ENCODE measurements at regions of chr12 and their contacts with region 1.

Region 1: GRCh38 chr12:56468216-56469006 is at the start of gene SPRYD4:
- DNase-seq: peak; percentile 96
- H3K4me3 Mint-ChIP-seq: peak within 1 kb of the TSS; percentile 93
- H3K27ac Mint-ChIP-seq: peak within 1 kb of the TSS; percentile 96
- H3K4me1 Mint-ChIP-seq: peaks cover 31% of the 10 kb centered on the region
- H3K27me3 Mint-ChIP-seq: no peaks in the 10 kb centered on the region
- total RNA-seq, gene SPRYD4: 2.4 to 2.9 TPM

Region 2: DNA sequence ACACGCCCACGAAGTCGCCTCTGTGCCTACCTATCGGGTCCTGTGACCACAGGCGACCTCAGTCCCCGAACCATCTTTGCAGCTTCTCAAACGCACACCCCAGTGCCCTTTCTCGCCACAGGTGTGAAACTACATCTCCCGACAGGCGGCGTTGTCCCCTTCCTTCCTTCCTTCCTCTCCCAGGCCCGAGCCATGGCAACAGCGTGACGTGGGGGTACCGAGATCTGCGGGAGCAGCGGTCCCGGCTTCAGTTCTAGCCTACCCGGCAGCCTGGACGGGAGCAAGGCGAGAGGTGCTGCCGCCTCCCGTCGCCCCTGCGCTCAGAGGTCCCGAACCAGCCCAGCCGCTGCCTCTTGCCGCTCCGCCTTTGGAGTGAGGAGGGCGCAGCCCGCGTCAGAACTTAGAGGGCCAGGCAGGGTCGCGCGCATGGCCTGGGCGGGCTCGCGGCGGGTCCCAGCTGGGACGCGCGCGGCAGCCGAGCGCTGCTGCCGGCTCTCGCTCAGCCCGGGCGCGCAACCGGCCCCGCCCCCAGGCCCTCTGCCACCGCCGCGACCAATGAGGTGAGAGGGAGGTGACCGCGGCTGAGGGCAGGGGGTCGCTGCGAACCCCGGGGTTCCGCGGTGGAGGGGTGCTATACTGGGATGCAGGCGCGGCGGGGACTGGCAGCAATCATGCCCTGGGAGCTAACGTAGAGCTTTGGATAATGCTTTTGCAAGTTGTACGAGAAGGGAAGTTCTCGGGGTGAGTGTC is 201.5 kb before region 1 on chr12 and contains the start of gene COQ10A:
- CTCF ChIA-PET with region 1: interaction called, 19 read pairs
- POLR2A ChIA-PET with region 1: no interaction called
- intact Hi-C with region 1: loop called (anchors 1 kb)
- DNase-seq: peak; percentile 91
- H3K4me3 Mint-ChIP-seq: peak within 1 kb of the TSS; percentile 88
- H3K27ac Mint-ChIP-seq: peak within 1 kb of the TSS; percentile 79
- H3K4me1 Mint-ChIP-seq: peaks cover 20% of the 10 kb centered on the region
- H3K27me3 Mint-ChIP-seq: no peaks in the 10 kb centered on the region
- total RNA-seq, gene COQ10A: 6.3 to 7.0 TPM

Region 3: DNA sequence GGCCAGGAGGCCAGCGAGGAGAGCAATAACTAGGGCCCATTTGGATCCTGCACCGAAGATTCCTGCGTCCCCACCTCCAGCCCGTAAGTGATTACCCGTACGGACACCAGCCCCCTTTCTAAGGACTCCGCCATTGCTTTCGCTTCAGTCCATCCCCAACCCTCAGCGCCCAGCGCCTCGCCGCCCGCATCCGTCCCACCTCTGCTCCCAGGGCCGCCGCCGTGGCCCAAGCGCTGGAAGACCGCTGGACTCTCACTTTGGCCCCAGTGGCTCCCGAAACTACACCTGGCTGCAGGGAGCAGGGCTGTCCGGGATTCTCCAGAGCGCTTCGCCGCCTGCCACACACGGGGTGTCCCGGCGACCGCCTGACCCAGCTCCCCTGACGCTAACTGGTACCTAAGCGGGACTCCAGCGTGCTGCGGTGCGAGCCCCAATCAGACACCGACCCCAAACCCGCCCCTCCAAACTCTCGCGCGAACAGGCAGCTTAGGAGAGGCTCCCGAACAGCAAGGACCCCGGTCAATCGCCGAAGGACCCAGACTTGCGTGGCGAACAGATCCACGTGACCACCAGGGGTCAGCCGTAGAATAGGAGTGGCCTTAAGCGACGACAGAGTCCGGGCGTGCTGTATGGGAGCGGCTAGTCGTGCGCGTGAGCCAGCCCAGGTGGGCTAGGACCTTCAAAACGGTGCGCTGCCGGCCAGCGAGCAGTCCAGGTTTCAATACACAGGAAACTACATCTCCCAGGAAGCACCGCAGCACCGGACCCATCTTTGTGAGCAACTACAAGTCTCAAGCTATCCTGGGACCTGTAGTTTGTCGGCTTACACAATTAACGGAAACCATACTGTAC is 152.6 kb before region 1 on chr12 and contains the start of gene CNPY2:
- CTCF ChIA-PET with region 1: interaction called, 32 read pairs
- POLR2A ChIA-PET with region 1: interaction called, 4 read pairs
- intact Hi-C with region 1: loop called (anchors 1 kb)
- DNase-seq: peak; percentile 95
- H3K4me3 Mint-ChIP-seq: peak within 1 kb of the TSS; percentile 98
- H3K27ac Mint-ChIP-seq: peak within 1 kb of the TSS; percentile 97
- H3K4me1 Mint-ChIP-seq: peaks cover 16% of the 10 kb centered on the region
- H3K27me3 Mint-ChIP-seq: no peaks in the 10 kb centered on the region
- total RNA-seq, gene CNPY2: 74.7 to 91.6 TPM

Region 4: GRCh38 chr12:56359851-56360767 is 108.3 kb before region 1 on chr12 and contains the start of gene STAT2:
- CTCF ChIA-PET with region 1: interaction called, 22 read pairs
- POLR2A ChIA-PET with region 1: interaction called, 8 read pairs
- intact Hi-C with region 1: loop called (anchors 1 kb)
- DNase-seq: peak; percentile 100
- H3K4me3 Mint-ChIP-seq: peak within 1 kb of the TSS; percentile 89
- H3K27ac Mint-ChIP-seq: peak within 1 kb of the TSS; percentile 94
- H3K4me1 Mint-ChIP-seq: peaks cover 19% of the 10 kb centered on the region
- H3K27me3 Mint-ChIP-seq: no peaks in the 10 kb centered on the region
- total RNA-seq, gene STAT2: 125 to 139 TPM

Region 5: GRCh38 chr12:56425193-56425592 is 43.2 kb before region 1 on chr12:
- CTCF ChIA-PET with region 1: interaction called, 12 read pairs
- POLR2A ChIA-PET with region 1: no interaction called
- intact Hi-C with region 1: no loop called
- DNase-seq: no peak
- H3K4me3 Mint-ChIP-seq: no peak overlapping the region
- H3K27ac Mint-ChIP-seq: no peak overlapping the region
- H3K4me1 Mint-ChIP-seq: peaks cover 4% of the 10 kb centered on the region
- H3K27me3 Mint-ChIP-seq: no peaks in the 10 kb centered on the region

Region 6: DNA sequence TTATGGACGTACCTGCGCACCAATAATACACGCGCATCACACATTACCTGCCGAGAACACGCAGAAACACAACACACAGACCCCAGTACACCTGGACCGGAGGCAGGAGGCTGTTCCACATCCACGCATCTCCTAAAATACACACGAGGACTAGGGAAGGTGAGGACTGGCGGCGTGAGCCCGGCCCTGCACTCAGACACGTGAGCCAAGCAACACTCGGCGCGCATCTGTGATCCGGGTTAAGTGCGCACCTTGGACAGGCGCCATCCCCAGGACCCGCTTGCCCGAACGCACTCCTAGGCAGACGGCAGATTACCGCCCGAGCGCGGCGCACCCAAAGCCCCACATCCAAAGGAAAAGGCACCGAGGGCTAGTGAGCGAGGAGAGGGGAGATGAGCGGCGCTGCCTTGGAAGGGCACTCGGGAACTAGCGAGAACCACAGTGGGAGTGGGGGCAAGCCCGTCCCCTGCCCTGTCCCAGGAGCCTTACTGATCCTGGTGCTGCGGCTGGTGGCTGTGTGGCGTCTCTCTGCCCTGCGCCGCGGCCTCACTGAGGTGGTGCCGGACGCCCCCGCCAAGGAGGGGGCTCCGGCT is 19.1 kb after region 1 on chr12:
- CTCF ChIA-PET with region 1: interaction called, 9 read pairs
- POLR2A ChIA-PET with region 1: no interaction called
- intact Hi-C with region 1: loop called (anchors 1 kb)
- DNase-seq: peak; percentile 54
- H3K4me3 Mint-ChIP-seq: peak overlapping the region; percentile 73
- H3K27ac Mint-ChIP-seq: no peak overlapping the region
- H3K4me1 Mint-ChIP-seq: peaks cover 19% of the 10 kb centered on the region
- H3K27me3 Mint-ChIP-seq: peaks cover 13% of the 10 kb centered on the region

Measured in activated CD4-positive, alpha-beta memory T cell treated with anti-CD3 and anti-CD28 coated beads for 36 hours (primary cell).